Naive thymus-derived CD4-positive, alpha-beta T cell (primary cell): ENCODE measurements at regions of chr5 and their contacts with region 1.

Region 1: DNA sequence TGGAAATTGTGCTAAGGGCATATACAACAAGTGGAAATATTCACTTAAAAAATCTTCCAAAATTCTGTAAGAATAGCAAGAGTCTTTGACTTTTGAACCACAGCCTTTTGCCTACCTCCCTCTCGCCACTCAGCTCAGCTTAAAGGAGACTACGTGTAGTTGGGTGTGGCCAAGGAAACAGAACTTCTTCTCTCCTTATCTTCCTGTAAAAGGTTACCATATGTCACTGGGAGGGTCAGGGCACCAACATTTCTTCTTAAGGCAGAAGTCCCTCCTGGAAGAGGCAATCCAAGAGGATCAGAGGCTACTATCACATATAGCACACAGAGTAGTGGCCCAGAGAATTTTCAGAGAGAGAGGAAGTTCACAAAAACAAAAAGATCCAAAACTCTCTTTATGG is 1733.9 kb downstream of the EFNA5 start:
- DNase-seq: no peak
- ATAC-seq: no peak
- H3K4me3 ChIP-seq: no peak overlapping the region
- H3K4me3 Mint-ChIP-seq: no peak overlapping the region
- H3K27ac ChIP-seq: no peak overlapping the region
- H3K27ac Mint-ChIP-seq: no peak overlapping the region
- H3K4me1 ChIP-seq: no peaks in the 10 kb centered on the region
- H3K4me1 Mint-ChIP-seq: no peaks in the 10 kb centered on the region
- H3K27me3 ChIP-seq: no peaks in the 10 kb centered on the region
- H3K27me3 Mint-ChIP-seq: no peaks in the 10 kb centered on the region

Region 2: DNA sequence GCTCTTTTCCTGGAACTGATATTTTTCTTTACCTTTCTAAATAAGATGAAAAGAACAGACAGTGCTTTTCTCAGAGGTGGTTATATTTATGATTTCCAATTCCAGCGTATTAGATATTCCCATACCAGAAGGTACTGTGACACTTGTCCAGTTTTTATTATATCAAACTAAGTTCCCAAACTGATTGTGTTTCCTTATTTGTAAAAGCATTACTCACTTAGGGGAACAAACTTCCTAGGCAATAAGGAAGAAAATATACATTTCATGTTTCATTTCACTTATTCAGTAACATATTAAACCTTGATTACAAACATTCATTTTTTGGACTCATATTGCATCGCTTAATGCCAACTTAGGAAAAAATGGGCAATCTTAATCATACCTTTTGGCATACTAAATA is 894.2 kb before region 1 on chr5:
- CTCF ChIA-PET with region 1: no interaction called
- POLR2A ChIA-PET with region 1: no interaction called
- intact Hi-C with region 1: no loop called
- DNase-seq: no peak
- ATAC-seq: no peak
- H3K4me3 ChIP-seq: no peak overlapping the region
- H3K4me3 Mint-ChIP-seq: no peak overlapping the region
- H3K27ac ChIP-seq: no peak overlapping the region
- H3K27ac Mint-ChIP-seq: no peak overlapping the region
- H3K4me1 ChIP-seq: no peaks in the 10 kb centered on the region
- H3K4me1 Mint-ChIP-seq: no peaks in the 10 kb centered on the region
- H3K27me3 ChIP-seq: no peaks in the 10 kb centered on the region
- H3K27me3 Mint-ChIP-seq: no peaks in the 10 kb centered on the region

Region 3: GRCh38 chr5:105903069-105903468 is 33.8 kb before region 1 on chr5:
- CTCF ChIA-PET with region 1: no interaction called
- POLR2A ChIA-PET with region 1: no interaction called
- intact Hi-C with region 1: loop called in 1 of 2 experiments (anchors 1 kb)
- DNase-seq: no peak
- ATAC-seq: no peak
- H3K4me3 ChIP-seq: no peak overlapping the region
- H3K4me3 Mint-ChIP-seq: no peak overlapping the region
- H3K27ac ChIP-seq: no peak overlapping the region
- H3K27ac Mint-ChIP-seq: no peak overlapping the region
- H3K4me1 ChIP-seq: no peaks in the 10 kb centered on the region
- H3K4me1 Mint-ChIP-seq: no peaks in the 10 kb centered on the region
- H3K27me3 ChIP-seq: no peaks in the 10 kb centered on the region
- H3K27me3 Mint-ChIP-seq: no peaks in the 10 kb centered on the region